ENCODE measurements at regions of chr4 and their contacts with region 1.

Region 1: GRCh38 chr4:98143001-98143899 is at the start of gene STPG2:
- DNase-seq: peak; percentile 97
- H3K4me3 ChIP-seq: peak within 1 kb of the TSS; percentile 72
- H3K27ac ChIP-seq: peak within 1 kb of the TSS; percentile 90
- H3K4me1 ChIP-seq: peaks cover 17% of the 10 kb centered on the region
- CTCF ChIP-seq: peak; percentile 88
- total RNA-seq, gene STPG2: not detected in 2 replicates

Region 2: DNA sequence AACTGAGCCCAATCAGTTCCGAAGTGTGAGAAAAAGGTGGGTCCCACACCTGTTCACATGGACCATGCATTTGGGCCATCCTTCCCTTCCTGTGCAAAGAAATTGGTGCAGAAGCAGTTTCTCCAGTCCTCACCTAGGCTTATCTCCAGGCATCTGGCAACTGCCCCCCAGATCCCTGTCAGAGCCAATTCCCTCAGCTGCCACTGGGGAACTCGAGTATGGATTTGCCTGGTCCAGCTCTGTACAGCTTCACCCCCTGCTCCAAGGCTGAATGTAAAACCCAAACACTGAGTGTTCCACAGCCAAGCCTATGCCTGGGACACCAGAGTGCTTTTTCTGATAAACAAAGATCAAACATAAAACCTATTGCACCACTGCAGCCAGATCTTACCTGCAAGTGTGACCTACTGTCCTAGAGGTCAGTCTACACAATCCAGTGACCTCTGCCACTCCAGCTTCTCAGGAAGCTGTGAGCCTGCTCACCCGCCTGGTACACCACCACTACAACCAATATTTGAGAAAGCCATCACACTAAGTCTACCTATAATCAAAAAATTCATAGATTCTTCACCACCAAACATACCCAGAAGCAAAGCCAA is 136.3 kb before region 1 on chr4:
- CTCF ChIA-PET with region 1: no interaction called
- POLR2A ChIA-PET with region 1: no interaction called
- intact Hi-C with region 1: no loop called
- DNase-seq: no peak
- H3K4me3 ChIP-seq: no peak overlapping the region
- H3K27ac ChIP-seq: no peak overlapping the region
- H3K4me1 ChIP-seq: no peaks in the 10 kb centered on the region
- CTCF ChIP-seq: no peak

Region 3: DNA sequence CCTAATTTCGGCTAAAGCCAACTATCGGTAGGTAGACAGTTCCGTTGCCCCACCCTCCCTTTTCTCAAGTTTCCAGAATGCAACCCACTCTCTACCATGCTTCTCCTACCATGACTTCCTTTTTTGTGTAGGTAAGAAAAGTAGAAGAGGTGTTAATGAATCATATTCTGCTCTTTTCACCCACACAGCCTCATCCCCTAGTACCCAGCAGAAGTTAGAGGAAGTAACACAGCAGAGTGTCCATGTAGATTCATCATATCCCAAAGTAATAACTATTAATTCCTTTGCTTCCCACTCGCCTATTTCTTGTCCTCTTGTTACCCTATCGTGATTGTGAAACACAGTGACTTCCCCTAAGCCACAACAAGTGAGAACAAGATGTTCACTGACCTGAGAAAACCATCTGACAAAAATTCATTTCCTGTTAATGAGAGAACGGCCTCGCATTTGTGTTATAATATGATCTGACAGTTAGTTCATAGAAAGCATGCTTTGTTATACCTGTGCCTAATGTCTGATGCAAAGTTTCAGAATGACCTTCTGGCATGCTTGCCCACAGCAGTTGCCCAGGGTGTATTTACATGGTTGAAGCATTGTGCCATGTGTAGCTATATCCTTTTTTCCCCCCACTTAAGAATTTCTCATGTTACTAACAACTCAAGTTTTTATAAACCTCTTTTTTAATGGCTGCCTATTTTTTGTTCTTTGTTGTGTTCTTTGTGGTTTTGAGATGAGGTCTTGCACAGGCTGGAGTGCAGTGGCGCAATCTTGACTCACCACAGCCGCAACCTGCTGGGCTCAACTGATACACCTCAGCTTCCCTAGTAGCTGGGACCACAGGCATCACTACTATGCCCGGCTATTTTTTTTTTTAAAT is 303.5 kb after region 1 on chr4:
- CTCF ChIA-PET with region 1: no interaction called
- POLR2A ChIA-PET with region 1: interaction called, 3 read pairs
- intact Hi-C with region 1: loop called (anchors 5 kb)
- DNase-seq: peak; percentile 65
- H3K4me3 ChIP-seq: peak overlapping the region; percentile 0
- H3K27ac ChIP-seq: peak overlapping the region; percentile 41
- H3K4me1 ChIP-seq: peaks cover 29% of the 10 kb centered on the region
- CTCF ChIP-seq: no peak

Region 4: GRCh38 chr4:98928505-98929340 is 785.5 kb after region 1 on chr4 and contains the start of gene EIF4E:
- CTCF ChIA-PET with region 1: no interaction called
- POLR2A ChIA-PET with region 1: interaction called, 3 read pairs
- intact Hi-C with region 1: loop called (anchors 2 kb)
- DNase-seq: peak; percentile 99
- H3K4me3 ChIP-seq: peak within 1 kb of the TSS; percentile 88
- H3K27ac ChIP-seq: peak within 1 kb of the TSS; percentile 83
- H3K4me1 ChIP-seq: peaks cover 32% of the 10 kb centered on the region
- CTCF ChIP-seq: peak; percentile 45
- total RNA-seq, gene EIF4E: 136 and 152 TPM in 2 replicates

Region 5: GRCh38 chr4:99054428-99054994 is 911.3 kb after region 1 on chr4:
- CTCF ChIA-PET with region 1: no interaction called
- POLR2A ChIA-PET with region 1: no interaction called
- intact Hi-C with region 1: loop called (anchors 10 kb)
- DNase-seq: no peak
- H3K4me3 ChIP-seq: no peak overlapping the region
- H3K27ac ChIP-seq: no peak overlapping the region
- H3K4me1 ChIP-seq: peaks cover 14% of the 10 kb centered on the region
- CTCF ChIP-seq: no peak

Region 6: DNA sequence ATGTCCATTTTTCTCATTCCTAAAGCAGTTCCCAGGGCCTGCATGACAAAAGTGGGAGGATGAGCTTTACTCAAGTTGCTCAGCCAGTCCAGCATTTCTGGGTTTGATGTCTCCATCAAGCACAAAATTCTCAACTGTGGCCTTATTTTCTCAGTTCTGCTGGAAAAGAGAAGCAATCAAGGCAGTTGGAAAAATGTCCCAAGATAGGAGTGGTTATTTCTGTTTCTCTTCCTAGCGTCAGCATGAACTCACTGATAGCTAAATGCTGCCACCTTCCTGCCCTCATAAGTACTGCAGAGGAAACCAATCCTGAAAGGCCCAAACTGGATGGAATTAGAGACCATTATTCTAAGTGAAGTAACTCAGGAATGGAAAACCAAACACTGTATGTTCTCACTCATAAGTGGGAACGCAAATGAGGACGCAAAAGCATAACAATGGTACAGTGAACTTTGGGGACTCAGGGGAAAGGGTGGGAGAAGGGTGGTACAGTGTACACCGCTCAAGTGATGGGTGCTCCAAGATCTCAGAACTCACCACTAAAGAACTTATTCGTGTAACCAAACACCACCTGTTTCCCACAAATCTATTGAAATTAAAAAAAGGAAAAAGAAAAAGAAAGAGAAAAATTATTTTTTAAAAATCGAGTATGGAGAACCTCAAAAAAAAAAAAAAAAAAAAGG is 1262.3 kb after region 1 on chr4:
- CTCF ChIA-PET with region 1: interaction called, 3 read pairs
- POLR2A ChIA-PET with region 1: no interaction called
- intact Hi-C with region 1: loop called (anchors 10 kb)
- DNase-seq: peak; percentile 52
- H3K4me3 ChIP-seq: no peak overlapping the region
- H3K27ac ChIP-seq: no peak overlapping the region
- H3K4me1 ChIP-seq: no peaks in the 10 kb centered on the region
- CTCF ChIP-seq: peak; percentile 93